Kidney (tissue), 22 donors: ENCODE measurements at regions of chr19 and their contacts with region 1.

Region 1: GRCh38 chr19:34712395-34713261 is 21.4 kb upstream of the ZNF181 start:
- DNase-seq: peak in 4 of 5 donors; percentile 49 to 79 (median 59)
- H3K4me3 ChIP-seq: no peak overlapping the region
- H3K27ac ChIP-seq: no peak overlapping the region
- H3K4me1 ChIP-seq: no peaks in the 10 kb centered on the region
- H3K27me3 ChIP-seq: no peaks in the 10 kb centered on the region
- CTCF ChIP-seq: peak; percentile 62

Region 2: GRCh38 chr19:34639491-34640085 is 73.0 kb before region 1 on chr19:
- intact Hi-C with region 1: loop called (anchors 5 kb)
- DNase-seq: peak in 4 of 5 donors; percentile 50 to 89 (median 76)
- H3K4me3 ChIP-seq: no peak overlapping the region
- H3K27ac ChIP-seq: no peak overlapping the region
- H3K4me1 ChIP-seq: no peaks in the 10 kb centered on the region
- H3K27me3 ChIP-seq: no peaks in the 10 kb centered on the region
- CTCF ChIP-seq: peak; percentile 68

Region 3: GRCh38 chr19:34772697-34773554 is 60.3 kb after region 1 on chr19 and contains the start of gene ZNF599:
- intact Hi-C with region 1: no loop called
- DNase-seq: peak; percentile 93 to 97 (median 96)
- H3K4me3 ChIP-seq: peak within 1 kb of the TSS; percentile 87 to 95 (median 94)
- H3K27ac ChIP-seq: peak within 1 kb of the TSS; percentile 58 to 62
- H3K4me1 ChIP-seq: peaks cover 0 to 8% (median 7%) of the 10 kb centered on the region in 3 donors
- H3K27me3 ChIP-seq: no peaks in the 10 kb centered on the region
- CTCF ChIP-seq: no peak
- total RNA-seq, gene ZNF599: 8.9 TPM

Region 4: DNA sequence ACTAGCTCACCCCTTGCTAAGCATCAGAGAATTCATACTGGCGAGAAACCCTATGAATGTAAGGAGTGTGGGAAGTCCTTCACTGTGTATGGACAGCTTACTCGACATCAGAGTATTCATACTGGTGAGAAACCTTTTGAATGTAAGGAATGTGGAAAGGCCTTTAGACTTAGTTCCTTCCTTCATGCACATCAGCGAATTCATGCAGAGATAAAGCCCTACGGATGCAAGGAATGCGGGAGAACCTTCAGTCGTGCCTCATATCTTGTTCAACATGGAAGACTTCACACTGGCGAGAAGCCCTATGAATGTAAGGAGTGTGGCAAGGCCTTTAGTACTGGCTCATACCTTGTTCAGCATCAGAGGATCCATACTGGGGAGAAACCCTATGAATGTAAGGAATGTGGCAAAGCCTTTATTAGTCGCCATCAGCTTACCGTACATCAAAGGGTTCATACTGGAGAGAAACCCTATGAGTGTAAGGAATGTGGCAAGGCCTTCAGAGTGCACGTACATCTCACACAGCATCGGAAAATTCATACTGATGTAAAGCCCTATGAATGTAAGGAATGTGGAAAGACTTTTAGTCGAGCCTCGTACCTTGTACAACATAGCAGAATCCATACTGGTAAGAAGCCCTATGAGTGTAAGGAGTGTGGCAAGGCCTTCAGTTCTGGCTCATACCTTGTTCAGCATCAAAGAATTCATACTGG is 231.4 kb after region 1 on chr19:
- intact Hi-C with region 1: no loop called
- DNase-seq: no peak
- H3K4me3 ChIP-seq: no peak overlapping the region
- H3K27ac ChIP-seq: no peak overlapping the region
- H3K4me1 ChIP-seq: no peaks in the 10 kb centered on the region
- H3K27me3 ChIP-seq: no peaks in the 10 kb centered on the region
- CTCF ChIP-seq: no peak